ENCODE measurements at regions of chr7 and their contacts with region 1.

Region 1: GRCh38 chr7:94907026-94907810 is at the start of gene PPP1R9A:
- DNase-seq: peak; percentile 31 to 78 (median 56)
- H3K4me3 ChIP-seq: peak within 1 kb of the TSS; percentile 58 to 90 (median 78)
- H3K27ac ChIP-seq: peak within 1 kb of the TSS; percentile 56 to 93 (median 84)
- H3K27me3 ChIP-seq: no peaks in the 10 kb centered on the region
- CTCF ChIP-seq: peak in 49 of 56 donors; percentile 14 to 63 (median 42)
- total RNA-seq, gene PPP1R9A: 63.1 to 120 (median 86.9) TPM

Region 2: DNA sequence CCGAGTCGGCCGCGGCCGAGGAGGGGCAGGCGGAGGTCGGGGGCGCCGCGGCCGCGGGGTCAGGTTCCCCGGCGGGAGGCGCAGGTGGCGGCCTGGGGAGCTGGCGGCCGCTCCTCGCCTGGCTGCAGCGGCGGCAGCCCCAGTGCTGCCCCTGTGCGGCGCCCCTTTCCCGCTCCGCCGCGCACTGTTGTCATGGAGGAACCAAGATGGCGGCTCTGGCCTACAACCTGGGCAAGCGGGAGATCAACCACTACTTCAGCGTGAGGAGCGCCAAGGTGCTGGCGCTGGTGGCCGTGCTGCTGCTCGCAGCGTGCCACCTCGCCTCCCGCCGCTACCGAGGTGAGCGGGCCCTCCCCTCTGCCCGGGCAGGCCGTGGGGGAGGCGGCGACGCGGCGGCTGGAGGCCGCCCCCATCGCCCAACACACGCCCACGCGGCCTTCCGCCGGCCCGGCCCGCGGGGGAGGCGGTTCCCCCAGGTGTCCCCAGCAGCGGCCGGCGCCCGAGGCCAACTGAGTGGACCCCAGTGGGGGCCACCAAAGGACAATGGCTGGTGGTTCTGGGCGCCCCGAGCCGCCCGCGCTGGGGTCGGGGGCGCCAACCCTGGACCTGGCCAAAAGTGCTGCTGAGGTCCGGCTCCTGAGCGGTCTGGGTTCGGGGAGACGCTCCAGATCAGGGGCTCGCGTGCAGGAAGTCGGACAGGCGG is 397.2 kb before region 1 on chr7:
- intact Hi-C with region 1: loop called (anchors 5 kb)
- DNase-seq: peak; percentile 51 to 80 (median 62)
- H3K4me3 ChIP-seq: peak overlapping the region; percentile 66 to 97 (median 88)
- H3K27ac ChIP-seq: peak overlapping the region; percentile 84 to 99 (median 96)
- H3K27me3 ChIP-seq: no peaks in the 10 kb centered on the region
- CTCF ChIP-seq: peak in 44 of 56 donors; percentile 7 to 65 (median 33)

Region 3: GRCh38 chr7:94657771-94658693 is 249.2 kb before region 1 on chr7:
- intact Hi-C with region 1: loop called in 1 of 2 experiments (anchors 5 kb)
- DNase-seq: peak; percentile 69 to 96 (median 93)
- H3K4me3 ChIP-seq: peak overlapping the region; percentile 54 to 92 (median 78)
- H3K27ac ChIP-seq: peak overlapping the region in 53 of 59 donors; percentile 20 to 96 (median 73)
- H3K27me3 ChIP-seq: no peaks in the 10 kb centered on the region
- CTCF ChIP-seq: peak in 8 of 56 donors; percentile 6 to 29 (median 10)

Region 4: DNA sequence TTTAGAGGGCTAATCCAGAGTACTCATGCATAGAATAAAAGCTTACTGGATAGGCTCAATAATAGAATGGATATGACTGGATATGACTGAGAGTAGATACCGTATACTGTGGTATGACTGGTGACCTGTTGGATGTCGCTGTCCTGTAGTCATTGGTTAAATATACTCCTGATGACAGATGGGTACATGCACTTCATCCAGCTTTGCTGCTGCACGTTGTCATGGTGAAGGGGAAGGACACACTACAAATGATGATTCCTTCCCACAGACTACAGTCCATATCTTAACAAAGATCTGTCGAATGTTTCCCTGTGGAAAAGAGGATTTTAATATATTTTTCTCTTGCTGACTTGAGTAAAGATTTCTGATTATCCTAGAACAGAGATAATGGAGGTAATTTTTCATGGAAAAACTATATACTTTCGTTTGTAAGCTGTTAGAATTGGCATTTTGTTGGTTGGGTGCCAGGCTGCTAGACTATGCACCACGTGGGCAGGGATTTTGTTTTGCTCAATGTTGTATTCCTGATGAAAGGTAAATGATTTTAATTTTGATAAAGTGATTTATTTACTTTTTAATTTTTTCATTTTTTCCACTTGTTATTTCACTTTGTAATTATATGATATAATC is 97.5 kb after region 1 on chr7:
- intact Hi-C with region 1: loop called in 1 of 2 experiments (anchors 10 kb)
- DNase-seq: peak in 1 of 10 donors; percentile 7
- H3K4me3 ChIP-seq: peak overlapping the region in 6 of 59 donors; percentile 7 to 28 (median 23)
- H3K27ac ChIP-seq: no peak overlapping the region
- H3K27me3 ChIP-seq: no peaks in the 10 kb centered on the region
- CTCF ChIP-seq: no peak

Region 5: DNA sequence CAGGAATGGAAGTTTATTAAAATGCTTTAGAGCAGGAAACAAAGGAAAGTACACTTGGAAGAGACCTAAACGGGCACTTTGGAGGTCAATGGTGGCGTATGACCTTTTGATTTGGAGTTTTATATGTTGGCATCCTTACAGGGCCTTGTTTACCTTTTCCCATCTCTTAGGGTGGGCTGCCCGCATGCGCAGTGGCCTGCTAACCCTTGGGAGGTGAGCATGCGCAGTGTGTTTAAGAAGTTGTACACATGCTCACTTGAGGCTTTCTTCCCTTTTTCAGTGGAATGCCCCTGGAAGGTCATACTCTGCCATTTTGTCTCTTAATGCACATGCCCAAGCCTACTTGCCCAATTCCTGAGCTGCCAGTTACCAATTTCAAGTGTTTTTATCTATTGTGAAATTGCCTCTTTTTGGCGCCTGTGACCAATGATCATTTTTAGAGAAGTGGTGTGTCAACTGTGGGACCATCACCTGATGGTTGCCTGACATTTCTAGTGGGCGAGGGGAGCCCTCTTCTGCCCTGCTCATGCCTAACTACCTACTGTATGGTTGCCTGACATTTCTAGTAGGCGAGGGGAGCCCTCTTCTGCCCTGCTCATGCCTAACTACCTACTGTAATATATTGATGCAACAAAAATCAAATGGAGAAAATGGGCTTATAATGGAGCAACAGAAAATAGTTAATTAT is 138.2 kb after region 1 on chr7:
- intact Hi-C with region 1: loop called in 1 of 2 experiments (anchors 10 kb)
- DNase-seq: peak in 7 of 10 donors; percentile 25 to 80 (median 58)
- H3K4me3 ChIP-seq: no peak overlapping the region
- H3K27ac ChIP-seq: peak overlapping the region in 22 of 59 donors; percentile 22 to 96 (median 90)
- H3K27me3 ChIP-seq: no peaks in the 10 kb centered on the region
- CTCF ChIP-seq: peak in 52 of 56 donors; percentile 17 to 73 (median 45)

Region 6: GRCh38 chr7:95199779-95200558 is 292.8 kb after region 1 on chr7:
- intact Hi-C with region 1: loop called in 1 of 2 experiments (anchors 10 kb)
- DNase-seq: peak in 9 of 10 donors; percentile 43 to 80 (median 52)
- H3K4me3 ChIP-seq: no peak overlapping the region
- H3K27ac ChIP-seq: peak overlapping the region in 29 of 59 donors; percentile 1 to 67 (median 36)
- H3K27me3 ChIP-seq: no peaks in the 10 kb centered on the region
- CTCF ChIP-seq: peak; percentile 28 to 89 (median 78)

Region 7: DNA sequence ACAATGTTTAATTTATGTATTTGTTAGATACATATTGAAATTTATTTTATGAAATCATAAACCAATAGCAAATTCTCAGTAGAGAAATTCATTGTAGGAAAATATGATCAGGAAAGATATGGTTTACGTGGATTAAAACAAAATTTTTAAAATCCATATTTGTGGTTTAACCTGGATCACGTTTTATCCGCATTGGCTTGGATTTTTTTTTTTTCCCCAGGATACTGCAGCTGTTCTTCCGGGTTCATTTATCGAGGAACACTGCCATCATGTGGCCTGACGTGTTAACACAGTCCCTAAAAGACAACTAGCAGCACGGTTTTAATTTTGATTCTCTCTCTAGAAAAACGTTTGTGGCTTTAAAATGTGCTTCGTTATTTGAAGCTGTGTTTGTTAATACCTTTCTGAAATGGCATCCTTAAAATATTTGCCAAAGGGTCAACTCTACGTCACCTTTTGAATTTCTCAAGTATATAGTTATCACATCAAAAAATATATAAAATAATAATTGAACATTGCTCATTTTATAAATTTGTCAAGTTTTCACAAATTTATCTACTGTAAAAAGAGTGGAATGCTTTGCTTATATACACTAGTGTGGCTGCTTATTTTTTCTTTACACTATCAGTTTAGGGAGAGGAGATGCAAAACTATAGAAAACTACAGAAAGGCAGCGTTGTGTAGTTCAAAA is 569.8 kb after region 1 on chr7:
- intact Hi-C with region 1: loop called in 1 of 2 experiments (anchors 10 kb)
- DNase-seq: peak in 9 of 10 donors; percentile 23 to 86 (median 58)
- H3K4me3 ChIP-seq: peak overlapping the region in 22 of 59 donors; percentile 1 to 61 (median 16)
- H3K27ac ChIP-seq: peak overlapping the region in 4 of 59 donors; percentile 3 to 21 (median 20)
- H3K27me3 ChIP-seq: no peaks in the 10 kb centered on the region
- CTCF ChIP-seq: peak; percentile 77 to 99 (median 90)